ENCODE measurements at regions of chr4 and their contacts with region 1.

Region 1: DNA sequence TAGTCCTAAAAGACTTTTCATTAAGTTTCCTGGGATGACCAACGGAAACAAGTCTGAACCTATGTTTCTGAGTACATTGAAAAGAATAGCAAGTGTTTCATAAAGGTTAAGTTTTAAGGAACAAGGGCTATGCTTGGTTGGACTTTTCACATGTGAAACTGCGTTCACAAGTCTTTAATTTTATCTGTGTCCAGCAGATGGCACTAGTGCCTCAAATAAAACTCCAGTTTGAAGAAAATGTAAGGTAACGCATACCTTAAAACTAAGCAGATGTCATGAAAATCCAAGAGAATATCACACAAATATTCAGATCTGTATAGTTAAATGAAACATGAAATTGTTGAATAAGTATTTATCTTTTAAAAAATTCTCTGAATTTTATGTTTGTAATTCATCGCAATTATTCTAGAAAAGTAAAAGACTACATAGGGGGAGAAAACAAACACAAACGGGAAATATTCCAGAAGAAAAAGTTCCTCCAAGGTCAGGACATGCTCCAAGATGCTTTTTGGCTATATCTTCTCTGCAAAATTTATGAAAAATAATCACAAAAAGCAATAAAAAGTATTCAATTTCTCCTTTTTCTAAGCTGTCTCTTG is 89.6 kb upstream of the MAD2L1 start:
- DNase-seq: peak; percentile 73
- H3K4me3 ChIP-seq: no peak overlapping the region
- H3K27ac ChIP-seq: no peak overlapping the region
- H3K4me1 ChIP-seq: no peaks in the 10 kb centered on the region
- H3K27me3 ChIP-seq: no peaks in the 10 kb centered on the region
- CTCF ChIP-seq: peak; percentile 69

Region 2: DNA sequence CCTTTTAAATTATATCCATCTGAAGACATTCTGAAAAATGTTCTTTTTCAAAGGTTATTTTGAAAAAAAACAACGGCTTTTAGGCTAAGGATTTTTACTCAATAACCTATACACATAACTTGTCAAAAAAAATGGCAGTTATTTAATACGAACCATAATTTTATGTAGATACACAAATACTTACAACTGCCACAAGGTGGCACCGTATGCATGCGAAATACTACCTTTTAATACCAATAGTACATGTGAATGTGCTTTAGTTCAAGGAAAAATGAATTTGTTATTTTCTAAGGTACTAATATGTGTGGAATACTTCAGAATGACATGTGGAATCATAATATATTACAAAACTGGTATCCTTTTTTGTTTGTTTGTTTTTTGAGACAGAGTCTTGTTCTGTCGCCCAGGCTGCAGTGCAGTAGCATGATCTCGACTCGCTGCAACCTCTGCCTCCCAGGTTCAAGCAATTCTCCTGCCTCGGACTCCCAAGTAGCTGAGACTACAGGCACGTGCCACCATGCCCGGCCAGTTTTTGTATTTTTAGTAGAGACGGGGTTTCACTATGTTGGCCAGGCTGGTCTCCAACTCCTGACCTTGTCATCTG is 84.9 kb before region 1 on chr4:
- CTCF ChIA-PET with region 1: no interaction called
- POLR2A ChIA-PET with region 1: no interaction called
- intact Hi-C with region 1: loop called (anchors 5 kb)
- DNase-seq: peak; percentile 70
- H3K4me3 ChIP-seq: no peak overlapping the region
- H3K27ac ChIP-seq: no peak overlapping the region
- H3K4me1 ChIP-seq: peaks cover 10% of the 10 kb centered on the region
- H3K27me3 ChIP-seq: no peaks in the 10 kb centered on the region
- CTCF ChIP-seq: peak; percentile 70

Region 3: GRCh38 chr4:120718979-120719566 is 562.9 kb after region 1 on chr4:
- CTCF ChIA-PET with region 1: no interaction called
- POLR2A ChIA-PET with region 1: no interaction called
- intact Hi-C with region 1: loop called (anchors 10 kb)
- DNase-seq: peak; percentile 62
- H3K4me3 ChIP-seq: no peak overlapping the region
- H3K27ac ChIP-seq: no peak overlapping the region
- H3K4me1 ChIP-seq: no peaks in the 10 kb centered on the region
- H3K27me3 ChIP-seq: no peaks in the 10 kb centered on the region
- CTCF ChIP-seq: peak; percentile 76

Region 4: GRCh38 chr4:121096629-121097028 is 940.4 kb after region 1 on chr4:
- CTCF ChIA-PET with region 1: no interaction called
- POLR2A ChIA-PET with region 1: no interaction called
- intact Hi-C with region 1: loop called (anchors 2 kb)
- DNase-seq: peak; percentile 70
- H3K4me3 ChIP-seq: no peak overlapping the region
- H3K27ac ChIP-seq: no peak overlapping the region
- H3K4me1 ChIP-seq: no peaks in the 10 kb centered on the region
- H3K27me3 ChIP-seq: no peaks in the 10 kb centered on the region
- CTCF ChIP-seq: peak; percentile 66

Region 5: GRCh38 chr4:121252224-121252806 is 1096.1 kb after region 1 on chr4:
- CTCF ChIA-PET with region 1: no interaction called
- POLR2A ChIA-PET with region 1: no interaction called
- intact Hi-C with region 1: loop called (anchors 5 kb)
- DNase-seq: peak; percentile 82
- H3K4me3 ChIP-seq: no peak overlapping the region
- H3K27ac ChIP-seq: no peak overlapping the region
- H3K4me1 ChIP-seq: peaks cover 8% of the 10 kb centered on the region
- H3K27me3 ChIP-seq: no peaks in the 10 kb centered on the region
- CTCF ChIP-seq: peak; percentile 86

Measured in A673 (cell line).